ENCODE measurements at regions of chr12 and their contacts with region 1.

Region 1: GRCh38 chr12:109719236-109720022 is 5.8 kb downstream of the FAM222A start:
- DNase-seq: no peak
- H3K4me3 ChIP-seq: no peak overlapping the region
- H3K27ac ChIP-seq: no peak overlapping the region
- H3K4me1 ChIP-seq: peaks cover 27 to 53% (median 41%) of the 10 kb centered on the region in 4 donors
- H3K27me3 ChIP-seq: peaks cover 10% of the 10 kb centered on the region
- CTCF ChIP-seq: no peak
- EP300 ChIP-seq: no peak
- POLR2A ChIP-seq: no peak

Region 2: DNA sequence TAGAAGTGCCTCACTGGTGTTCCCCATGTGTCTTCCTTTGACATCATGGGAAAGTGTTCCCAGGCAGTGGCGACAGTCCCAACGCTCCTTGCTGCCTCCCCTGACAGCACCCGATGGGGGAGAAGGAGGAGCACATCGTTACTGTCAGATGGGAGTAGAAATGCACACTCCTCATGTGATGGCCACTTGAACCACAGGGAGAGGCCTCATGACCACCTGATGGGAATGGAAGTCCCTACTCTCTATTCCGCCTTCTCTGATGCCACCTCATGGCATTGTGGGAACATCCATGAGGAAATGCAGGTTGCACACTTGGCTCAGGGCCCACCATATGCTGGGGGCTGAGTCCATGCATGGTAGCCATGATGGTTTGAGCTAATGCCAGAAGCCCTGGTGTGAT is 973.8 kb before region 1 on chr12:
- in situ Hi-C with region 1: no loop called
- intact Hi-C with region 1: loop called (anchors 5 kb)
- DNase-seq: no peak
- H3K4me3 ChIP-seq: no peak overlapping the region
- H3K27ac ChIP-seq: no peak overlapping the region
- H3K4me1 ChIP-seq: peaks cover 0 to 19% (median 4%) of the 10 kb centered on the region in 4 donors
- H3K27me3 ChIP-seq: no peaks in the 10 kb centered on the region
- CTCF ChIP-seq: no peak
- EP300 ChIP-seq: no peak
- POLR2A ChIP-seq: no peak